Thyroid gland (tissue), 4 donors: ENCODE measurements at regions of chr6 and their contacts with region 1.

Region 1: DNA sequence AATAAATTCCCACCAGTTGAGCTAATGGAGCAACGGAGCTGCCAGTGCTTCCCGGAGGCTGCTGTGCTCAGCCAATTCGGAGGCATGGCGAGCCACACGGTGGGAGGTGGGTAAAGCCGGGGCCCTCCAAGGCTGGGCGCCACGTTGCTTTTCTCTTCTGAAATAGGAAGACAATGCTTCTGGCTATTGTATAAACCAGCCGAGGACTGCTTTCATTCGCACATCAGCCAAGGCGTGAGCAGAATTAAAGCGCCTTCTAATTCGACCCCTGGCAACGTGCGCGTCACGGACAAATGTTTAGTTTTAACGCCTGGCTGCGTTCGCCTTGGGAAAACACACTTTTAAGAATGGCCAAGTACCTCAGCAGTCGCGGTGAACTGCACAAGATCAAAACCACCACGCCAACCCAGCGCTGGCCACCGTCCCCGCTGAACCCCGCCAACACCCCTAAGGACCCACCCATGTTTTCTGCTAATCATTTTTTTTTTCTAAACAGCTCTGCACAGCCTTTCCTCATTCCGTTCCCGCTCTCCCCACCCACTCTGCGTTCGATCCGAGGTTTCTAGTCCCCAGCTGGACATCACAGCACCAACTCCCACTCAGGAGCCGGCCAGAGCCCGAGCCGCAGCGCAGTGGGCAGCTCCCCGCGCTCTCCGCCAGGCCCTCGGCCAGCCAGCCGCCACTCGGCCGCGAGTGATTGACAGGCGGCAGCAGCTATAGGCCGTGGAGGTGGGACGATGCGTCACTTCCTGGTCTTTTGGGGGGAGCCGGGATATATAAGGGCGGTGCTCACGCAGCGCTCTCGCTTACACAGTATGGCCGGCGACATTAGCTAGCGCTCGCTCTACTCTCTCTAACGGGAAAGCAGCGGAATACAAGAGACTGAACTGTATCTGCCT is at the start of gene AMD1:
- DNase-seq: peak; percentile 97 to 98
- H3K4me3 ChIP-seq: peak within 1 kb of the TSS; percentile 77 to 97 (median 89)
- H3K27ac ChIP-seq: peak within 1 kb of the TSS; percentile 86 to 97 (median 95)
- H3K4me1 ChIP-seq: peaks cover 9 to 25% of the 10 kb centered on the region in 2 donors
- H3K27me3 ChIP-seq: no peaks in the 10 kb centered on the region
- CTCF ChIP-seq: peak in 1 of 6 experiments; percentile 19
- POLR2A ChIP-seq: peak; percentile 97 to 100
- total RNA-seq, gene AMD1: 77.2 to 194 (median 124) TPM

Region 2: DNA sequence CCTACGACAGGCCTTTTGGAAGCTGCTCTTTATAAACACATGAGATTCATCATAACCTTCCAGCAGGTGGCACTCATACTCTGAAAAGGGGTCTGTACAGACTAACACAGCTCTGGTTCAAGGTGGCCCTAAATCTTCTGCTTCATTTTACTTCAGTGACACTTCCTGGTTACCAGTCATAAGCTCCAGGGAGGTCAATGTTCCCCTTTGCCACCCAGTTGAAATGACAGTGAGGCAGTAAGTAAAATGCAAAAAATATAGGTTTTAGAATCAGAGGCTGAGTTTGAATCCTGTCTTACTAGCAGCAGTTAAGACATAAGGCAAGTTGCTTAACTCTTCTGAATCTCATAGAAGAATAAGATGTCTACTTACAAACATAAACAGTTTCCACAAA is 191.8 kb before region 1 on chr6:
- intact Hi-C with region 1: loop called (anchors 5 kb)
- DNase-seq: peak; percentile 46 to 60
- H3K4me3 ChIP-seq: no peak overlapping the region
- H3K27ac ChIP-seq: no peak overlapping the region
- H3K4me1 ChIP-seq: peaks cover 0 to 6% of the 10 kb centered on the region in 2 donors
- H3K27me3 ChIP-seq: no peaks in the 10 kb centered on the region
- CTCF ChIP-seq: peak in 5 of 6 experiments; percentile 50 to 85 (median 67)
- POLR2A ChIP-seq: no peak

Region 3: DNA sequence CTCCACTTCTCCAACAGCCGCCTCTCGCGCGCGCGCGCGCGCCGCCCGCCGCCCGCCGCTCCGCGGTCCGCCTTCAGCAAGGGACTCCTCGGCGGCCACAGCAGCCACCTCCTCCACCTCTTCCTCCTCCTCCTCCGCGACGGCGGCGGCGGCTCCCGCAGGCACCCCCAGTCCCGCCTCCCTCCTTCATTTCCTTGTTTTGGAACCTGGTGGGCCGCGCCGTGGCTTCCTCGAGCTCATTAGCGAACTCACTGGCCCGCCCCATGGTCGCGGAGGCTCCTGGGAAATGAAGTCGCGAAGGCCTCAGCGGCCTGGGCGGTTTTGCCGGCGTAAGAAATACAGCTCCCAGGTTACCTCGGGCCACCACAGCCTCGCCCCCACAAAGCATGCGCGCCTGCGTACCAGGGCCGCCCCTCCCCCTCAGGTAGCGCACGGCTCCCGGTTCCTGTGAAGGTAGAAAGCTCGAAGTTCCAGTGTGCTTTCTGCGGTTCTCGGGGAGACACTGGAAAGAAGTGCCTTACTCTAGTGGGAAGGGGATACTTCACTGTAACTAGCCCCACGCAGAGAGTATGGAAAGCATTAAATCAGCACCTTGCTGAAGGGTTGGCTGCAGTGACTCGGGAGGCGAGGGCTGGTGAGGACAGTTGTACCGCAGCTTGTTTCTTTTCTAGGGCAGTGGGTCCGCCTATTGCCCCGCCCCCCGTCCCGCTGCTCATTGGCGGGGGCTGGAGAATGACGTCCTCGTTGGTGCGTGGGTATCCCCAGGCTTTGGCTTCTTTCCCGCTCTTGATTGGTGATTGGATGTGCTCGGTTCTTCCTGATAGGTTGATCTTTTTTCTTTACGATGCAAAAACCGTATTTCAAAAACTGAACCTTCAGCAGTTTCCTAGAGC is 58.8 kb before region 1 on chr6 and contains the start of gene CDK19:
- intact Hi-C with region 1: loop called (anchors 2 kb)
- DNase-seq: peak; percentile 99
- H3K4me3 ChIP-seq: peak within 1 kb of the TSS; percentile 46 to 87 (median 86)
- H3K27ac ChIP-seq: peak within 1 kb of the TSS; percentile 92 to 98 (median 96)
- H3K4me1 ChIP-seq: peaks cover 12% of the 10 kb centered on the region in 2 donors
- H3K27me3 ChIP-seq: no peaks in the 10 kb centered on the region
- CTCF ChIP-seq: no peak
- POLR2A ChIP-seq: peak; percentile 78 to 92
- total RNA-seq, gene CDK19: 12.6 to 17.9 (median 13.3) TPM

Region 4: DNA sequence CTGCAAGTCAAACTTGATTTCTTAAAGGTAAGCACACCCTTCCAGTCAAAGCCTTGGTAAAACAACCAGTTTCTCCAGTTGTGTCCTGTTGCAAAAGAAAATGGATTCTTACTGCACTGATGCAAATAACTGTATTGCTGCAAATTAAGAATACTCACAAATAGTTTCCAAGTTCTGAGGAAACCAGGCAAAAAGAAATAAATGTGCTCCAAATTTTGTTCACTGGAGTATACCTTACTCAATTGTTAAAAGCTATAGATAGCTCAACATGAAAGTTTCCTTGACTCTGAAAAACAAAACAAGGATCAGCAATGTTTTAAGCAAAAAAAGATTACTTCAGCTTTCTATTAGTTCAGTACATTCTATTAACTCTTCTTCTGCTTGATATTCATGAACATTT is 288.3 kb after region 1 on chr6:
- intact Hi-C with region 1: no loop called
- DNase-seq: no peak
- H3K4me3 ChIP-seq: no peak overlapping the region
- H3K27ac ChIP-seq: no peak overlapping the region
- H3K4me1 ChIP-seq: no peaks in the 10 kb centered on the region
- H3K27me3 ChIP-seq: no peaks in the 10 kb centered on the region
- CTCF ChIP-seq: no peak
- POLR2A ChIP-seq: no peak

Region 5: DNA sequence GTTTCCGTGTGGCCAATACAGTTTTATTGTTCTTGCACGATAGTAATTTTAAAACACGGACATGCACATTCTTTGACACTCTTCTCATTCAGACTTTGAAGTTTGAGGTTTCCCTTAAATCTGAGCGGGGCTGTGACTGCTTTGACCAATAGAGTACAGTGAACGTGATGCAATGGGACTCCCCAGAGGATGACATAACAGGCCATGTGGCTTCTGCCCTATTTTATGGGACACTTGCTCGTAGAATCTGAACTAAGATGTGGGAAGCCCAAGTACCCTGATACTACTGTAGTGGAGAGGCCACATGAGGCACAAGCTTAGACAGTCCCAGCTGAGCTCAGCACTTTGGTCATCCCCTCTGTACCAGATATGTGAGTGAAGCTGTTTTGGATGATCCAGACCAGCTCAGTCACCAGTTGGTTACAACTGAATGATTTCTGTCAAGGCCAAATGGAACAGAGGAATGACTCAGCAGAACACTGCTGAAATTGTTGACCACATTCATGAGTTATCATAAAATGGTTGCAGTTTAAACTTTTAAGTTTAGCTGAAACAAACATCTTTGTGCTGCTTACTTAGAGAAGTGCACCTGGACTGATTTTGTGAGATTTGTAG is 1752.3 kb after region 1 on chr6:
- intact Hi-C with region 1: no loop called
- DNase-seq: peak in 1 of 2 donors; percentile 23
- H3K4me3 ChIP-seq: no peak overlapping the region
- H3K27ac ChIP-seq: no peak overlapping the region
- H3K4me1 ChIP-seq: peaks cover 3 to 6% of the 10 kb centered on the region in 2 donors
- H3K27me3 ChIP-seq: no peaks in the 10 kb centered on the region
- CTCF ChIP-seq: no peak
- POLR2A ChIP-seq: no peak